Activated CD8-positive, alpha-beta memory T cell treated with anti-CD3 and anti-CD28 coated beads, Interleukin-2, amount 10 ng/mL, durations not matched to agents 7 days and 5 days (primary cell): ENCODE measurements at regions of chr6 and their contacts with region 1.

Region 1: GRCh38 chr6:43667245-43668150 is 20.1 kb downstream of the MRPS18A start:
- DNase-seq: peak; percentile 86
- ATAC-seq: peak; percentile 75
- H3K4me3 Mint-ChIP-seq: no peak overlapping the region
- H3K27ac Mint-ChIP-seq: peak overlapping the region; percentile 24
- H3K4me1 Mint-ChIP-seq: peaks cover 38% of the 10 kb centered on the region
- H3K27me3 Mint-ChIP-seq: peaks cover 11% of the 10 kb centered on the region

Region 2: GRCh38 chr6:43297644-43298564 is 369.6 kb before region 1 on chr6 and contains the start of gene SLC22A7:
- CTCF ChIA-PET with region 1: no interaction called
- DNase-seq: no peak
- ATAC-seq: no peak
- H3K4me3 Mint-ChIP-seq: no peak within 1 kb of the TSS
- H3K27ac Mint-ChIP-seq: no peak within 1 kb of the TSS
- H3K4me1 Mint-ChIP-seq: no peaks in the 10 kb centered on the region
- H3K27me3 Mint-ChIP-seq: peaks cover 11% of the 10 kb centered on the region
- total RNA-seq, gene SLC22A7: not detected

Region 3: GRCh38 chr6:43644931-43645612 is 22.4 kb before region 1 on chr6 and contains the start of gene RSPH9:
- CTCF ChIA-PET with region 1: interaction called, 34 read pairs
- DNase-seq: peak; percentile 76
- ATAC-seq: peak; percentile 91
- H3K4me3 Mint-ChIP-seq: peak within 1 kb of the TSS; percentile 63
- H3K27ac Mint-ChIP-seq: no peak within 1 kb of the TSS
- H3K4me1 Mint-ChIP-seq: peaks cover 14% of the 10 kb centered on the region
- H3K27me3 Mint-ChIP-seq: no peaks in the 10 kb centered on the region
- total RNA-seq, gene RSPH9: not detected

Region 4: GRCh38 chr6:43680308-43681200 is 13.1 kb after region 1 on chr6:
- CTCF ChIA-PET with region 1: interaction called, 11 read pairs
- DNase-seq: no peak
- ATAC-seq: no peak
- H3K4me3 Mint-ChIP-seq: no peak overlapping the region
- H3K27ac Mint-ChIP-seq: no peak overlapping the region
- H3K4me1 Mint-ChIP-seq: peaks cover 20% of the 10 kb centered on the region
- H3K27me3 Mint-ChIP-seq: no peaks in the 10 kb centered on the region

Region 5: GRCh38 chr6:43708860-43709653 is 41.6 kb after region 1 on chr6:
- CTCF ChIA-PET with region 1: interaction called, 11 read pairs
- DNase-seq: no peak
- ATAC-seq: peak; percentile 29
- H3K4me3 Mint-ChIP-seq: no peak overlapping the region
- H3K27ac Mint-ChIP-seq: peak overlapping the region; percentile 8
- H3K4me1 Mint-ChIP-seq: peaks cover 32% of the 10 kb centered on the region
- H3K27me3 Mint-ChIP-seq: peaks cover 44% of the 10 kb centered on the region

Region 6: DNA sequence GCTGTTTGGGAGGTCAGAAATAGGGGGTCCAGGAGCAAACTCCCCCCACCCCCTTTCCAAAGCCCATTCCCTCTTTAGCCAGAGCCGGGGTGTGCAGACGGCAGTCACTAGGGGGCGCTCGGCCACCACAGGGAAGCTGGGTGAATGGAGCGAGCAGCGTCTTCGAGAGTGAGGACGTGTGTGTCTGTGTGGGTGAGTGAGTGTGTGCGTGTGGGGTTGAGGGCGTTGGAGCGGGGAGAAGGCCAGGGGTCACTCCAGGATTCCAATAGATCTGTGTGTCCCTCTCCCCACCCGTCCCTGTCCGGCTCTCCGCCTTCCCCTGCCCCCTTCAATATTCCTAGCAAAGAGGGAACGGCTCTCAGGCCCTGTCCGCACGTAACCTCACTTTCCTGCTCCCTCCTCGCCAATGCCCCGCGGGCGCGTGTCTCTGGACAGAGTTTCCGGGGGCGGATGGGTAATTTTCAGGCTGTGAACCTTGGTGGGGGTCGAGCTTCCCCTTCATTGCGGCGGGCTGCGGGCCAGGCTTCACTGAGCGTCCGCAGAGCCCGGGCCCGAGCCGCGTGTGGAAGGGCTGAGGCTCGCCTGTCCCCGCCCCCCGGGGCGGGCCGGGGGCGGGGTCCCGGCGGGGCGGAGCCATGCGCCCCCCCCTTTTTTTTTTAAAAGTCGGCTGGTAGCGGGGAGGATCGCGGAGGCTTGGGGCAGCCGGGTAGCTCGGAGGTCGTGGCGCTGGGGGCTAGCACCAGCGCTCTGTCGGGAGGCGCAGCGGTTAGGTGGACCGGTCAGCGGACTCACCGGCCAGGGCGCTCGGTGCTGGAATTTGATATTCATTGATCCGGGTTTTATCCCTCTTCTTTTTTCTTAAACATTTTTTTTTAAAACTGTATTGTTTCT is 102.3 kb after region 1 on chr6 and contains the start of gene VEGFA:
- CTCF ChIA-PET with region 1: interaction called, 52 read pairs
- DNase-seq: peak; percentile 92
- ATAC-seq: peak; percentile 70
- H3K4me3 Mint-ChIP-seq: peak within 1 kb of the TSS; percentile 94
- H3K27ac Mint-ChIP-seq: peak within 1 kb of the TSS; percentile 84
- H3K4me1 Mint-ChIP-seq: peaks cover 30% of the 10 kb centered on the region
- H3K27me3 Mint-ChIP-seq: peaks cover 6% of the 10 kb centered on the region
- total RNA-seq, gene VEGFA: 27.8 to 29.0 TPM

Region 7: DNA sequence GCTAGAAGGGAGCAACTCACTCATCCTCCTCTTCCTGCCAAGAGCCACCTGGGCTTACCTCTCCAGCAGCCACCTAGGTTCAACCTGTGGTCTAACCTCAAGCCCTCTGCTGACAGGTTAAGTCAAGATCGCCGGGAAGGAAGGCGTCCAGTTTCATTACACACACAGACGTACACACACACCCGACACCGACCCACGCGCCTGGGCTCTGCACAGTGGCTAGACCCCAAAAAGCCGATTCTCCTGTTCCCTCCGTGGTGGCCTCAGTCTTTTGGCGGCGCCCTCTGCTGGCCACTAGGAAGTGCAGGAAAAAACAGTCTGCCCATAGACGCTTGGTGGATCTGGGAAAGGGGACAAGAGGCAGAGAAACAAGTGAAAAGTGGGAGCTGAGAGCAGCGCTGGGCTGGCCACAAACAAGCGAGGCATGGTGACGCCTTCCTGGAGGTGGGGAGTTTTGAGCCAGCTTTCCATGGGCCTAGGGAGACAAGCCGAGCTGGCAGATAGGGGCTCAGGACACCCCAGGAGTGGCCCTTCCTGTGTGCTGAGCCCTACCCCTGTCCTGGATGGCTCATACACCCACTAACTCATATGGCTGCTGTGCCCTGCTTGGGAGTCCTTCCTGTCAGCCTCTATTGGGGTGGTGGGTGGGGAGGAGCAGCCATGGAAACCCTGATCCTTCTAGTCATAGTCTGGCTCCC is 407.1 kb after region 1 on chr6:
- CTCF ChIA-PET with region 1: interaction called, 54 read pairs
- DNase-seq: peak; percentile 86
- ATAC-seq: peak; percentile 62
- H3K4me3 Mint-ChIP-seq: peak overlapping the region; percentile 86
- H3K27ac Mint-ChIP-seq: peak overlapping the region; percentile 86
- H3K4me1 Mint-ChIP-seq: peaks cover 16% of the 10 kb centered on the region
- H3K27me3 Mint-ChIP-seq: peaks cover 29% of the 10 kb centered on the region